ENCODE measurements at regions of chr12 and their contacts with region 1.

Region 1: DNA sequence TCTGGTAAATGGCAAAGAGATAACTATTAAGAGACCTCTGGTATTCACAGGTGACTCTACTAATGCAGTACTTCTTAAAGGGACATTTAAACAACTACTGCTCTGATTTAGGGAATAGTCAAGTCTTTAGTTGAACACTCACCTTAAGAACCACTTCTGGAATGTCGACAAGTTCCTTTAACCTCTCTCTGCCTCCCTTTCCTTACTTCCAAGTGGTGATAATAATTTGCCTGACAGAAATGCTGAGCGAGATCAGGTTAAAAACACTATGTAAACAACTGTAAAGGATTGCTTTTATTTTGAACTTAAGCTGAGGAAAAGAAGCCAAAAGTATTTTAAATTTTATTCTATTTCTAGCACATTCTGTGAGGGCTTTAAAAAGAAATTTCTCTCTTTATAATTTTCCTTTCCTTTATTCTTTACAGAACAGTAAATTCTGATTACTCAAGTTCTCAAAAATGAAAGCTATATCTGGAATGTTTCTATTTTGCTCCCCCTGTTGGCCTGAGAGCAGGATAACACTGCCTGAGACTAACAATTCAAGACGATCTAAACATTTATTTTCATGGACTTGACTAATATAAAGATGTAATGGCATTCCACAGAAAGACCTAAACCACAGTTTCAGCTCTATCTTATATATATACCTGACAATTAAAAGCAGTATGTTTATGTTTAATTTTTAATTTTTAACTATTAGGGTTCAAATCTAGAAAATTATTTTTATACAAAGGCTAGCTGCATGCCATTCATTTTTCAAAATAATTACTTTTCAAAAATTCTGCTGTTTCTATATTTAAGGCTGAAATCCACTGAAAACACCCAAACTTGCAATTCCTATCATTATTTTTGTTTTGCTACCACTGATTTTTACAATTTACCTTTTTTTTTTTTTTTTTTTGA is 29.2 kb downstream of the ZCCHC8 start:
- DNase-seq: no peak
- ATAC-seq: peak in 1 of 2 donors; percentile 50
- H3K4me3 ChIP-seq: no peak overlapping the region
- H3K27ac ChIP-seq: no peak overlapping the region
- H3K4me1 ChIP-seq: no peaks in the 10 kb centered on the region
- H3K27me3 ChIP-seq: no peaks in the 10 kb centered on the region

Region 2: DNA sequence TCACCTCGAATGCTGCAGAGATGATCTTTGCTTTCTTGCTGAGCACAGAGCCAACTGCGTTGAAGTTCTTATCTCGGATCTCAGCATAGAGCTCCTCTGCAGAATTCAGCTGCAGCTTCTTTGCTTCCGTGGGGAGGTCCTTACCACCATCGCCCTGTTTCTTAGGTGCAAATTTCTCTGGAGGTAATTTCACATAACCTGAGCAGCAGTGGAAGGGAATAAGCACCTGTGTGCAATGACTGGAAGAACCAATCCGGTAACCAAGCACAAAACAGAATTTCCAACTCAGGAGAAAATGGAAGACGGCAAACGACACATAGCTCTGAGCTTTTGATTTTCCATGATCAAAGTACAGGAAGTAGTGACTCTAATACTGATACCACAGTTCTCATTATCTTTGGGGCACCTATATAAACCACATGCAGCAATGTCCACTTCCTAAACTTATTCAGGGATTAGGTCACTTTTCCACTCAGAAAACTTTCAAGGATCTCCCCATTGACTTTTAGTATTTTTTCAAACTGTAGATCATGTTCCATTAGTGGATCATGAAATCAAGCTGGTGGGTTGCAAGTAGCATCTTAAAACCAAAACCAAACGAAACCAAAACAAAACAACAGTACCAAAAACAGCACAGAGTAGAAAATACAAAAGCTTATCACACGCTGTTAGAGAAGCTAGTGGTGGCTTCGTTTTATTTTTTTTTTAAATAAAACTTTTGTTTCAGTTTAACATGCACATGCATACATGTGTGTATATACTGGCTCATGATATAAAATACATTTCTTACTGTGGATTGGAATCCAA is 226.8 kb before region 1 on chr12:
- intact Hi-C with region 1: no loop called
- DNase-seq: no peak
- ATAC-seq: no peak
- H3K4me3 ChIP-seq: no peak overlapping the region
- H3K27ac ChIP-seq: no peak overlapping the region
- H3K4me1 ChIP-seq: no peaks in the 10 kb centered on the region
- H3K27me3 ChIP-seq: no peaks in the 10 kb centered on the region

Region 3: GRCh38 chr12:122399592-122400373 is 71.8 kb before region 1 on chr12:
- intact Hi-C with region 1: loop called (anchors 5 to 10 kb)
- DNase-seq: peak; percentile 63 to 76 (median 75)
- ATAC-seq: peak; percentile 87 to 88
- H3K4me3 ChIP-seq: peak overlapping the region; percentile 45
- H3K27ac ChIP-seq: peak overlapping the region; percentile 100
- H3K4me1 ChIP-seq: peaks cover 8% of the 10 kb centered on the region
- H3K27me3 ChIP-seq: no peaks in the 10 kb centered on the region

Region 4: DNA sequence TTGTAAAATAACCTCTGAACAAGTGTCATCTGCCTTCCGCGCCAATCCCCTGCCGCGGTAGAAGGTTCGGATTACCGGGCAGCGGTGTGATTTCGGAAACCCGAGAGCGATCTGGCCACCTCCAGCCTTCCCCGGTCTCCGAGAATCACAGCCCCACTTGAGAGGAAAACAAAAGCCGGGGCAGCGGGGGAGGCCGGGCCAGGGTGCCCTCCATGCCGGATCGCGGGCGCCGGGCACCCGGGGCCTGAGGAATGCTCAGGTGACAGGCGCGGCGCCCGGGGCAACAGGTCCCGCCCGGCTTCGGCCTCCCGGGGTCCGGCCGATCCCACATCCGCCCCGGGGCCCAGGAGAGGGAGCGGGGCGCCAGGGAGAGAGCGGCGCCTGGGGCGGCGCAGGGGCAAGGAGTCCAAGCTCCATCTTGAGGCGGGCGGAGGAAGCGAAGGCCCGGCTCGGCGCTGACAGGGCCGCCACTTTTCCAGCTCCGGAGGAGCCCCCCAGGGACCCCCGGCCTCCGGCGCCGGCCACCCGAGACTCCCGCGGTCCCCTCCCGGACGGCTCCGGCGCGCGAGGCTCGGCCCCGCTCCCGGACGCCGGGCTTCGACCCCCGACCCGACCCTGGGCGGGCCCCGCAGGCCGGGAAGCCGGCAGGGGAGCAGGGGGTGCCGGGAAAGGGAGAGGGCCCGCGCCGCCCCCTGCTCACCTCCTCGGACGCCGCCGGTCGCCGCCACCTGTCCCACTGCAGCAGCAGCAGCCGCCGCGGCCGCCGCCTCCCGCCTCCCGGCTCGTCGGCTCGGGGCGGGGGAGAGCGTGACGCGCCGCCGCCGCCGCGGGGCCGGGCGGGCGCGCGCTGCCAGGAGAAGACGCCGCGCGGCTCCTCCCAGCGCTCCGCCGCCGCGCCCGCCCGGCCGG is 49.5 kb before region 1 on chr12 and contains the start of gene CLIP1:
- intact Hi-C with region 1: loop called in 1 of 4 experiments (anchors 10 kb)
- DNase-seq: peak; percentile 75 to 88 (median 85)
- ATAC-seq: peak; percentile 89 to 91
- H3K4me3 ChIP-seq: peak within 1 kb of the TSS; percentile 97
- H3K27ac ChIP-seq: peak within 1 kb of the TSS; percentile 93
- H3K4me1 ChIP-seq: no peaks in the 10 kb centered on the region
- H3K27me3 ChIP-seq: no peaks in the 10 kb centered on the region
- total RNA-seq, gene CLIP1: 112 to 131 (median 121) TPM

Measured in right cardiac atrium (tissue), 5 donors.